ENCODE measurements at regions of chr6 and their contacts with region 1.

Region 1: DNA sequence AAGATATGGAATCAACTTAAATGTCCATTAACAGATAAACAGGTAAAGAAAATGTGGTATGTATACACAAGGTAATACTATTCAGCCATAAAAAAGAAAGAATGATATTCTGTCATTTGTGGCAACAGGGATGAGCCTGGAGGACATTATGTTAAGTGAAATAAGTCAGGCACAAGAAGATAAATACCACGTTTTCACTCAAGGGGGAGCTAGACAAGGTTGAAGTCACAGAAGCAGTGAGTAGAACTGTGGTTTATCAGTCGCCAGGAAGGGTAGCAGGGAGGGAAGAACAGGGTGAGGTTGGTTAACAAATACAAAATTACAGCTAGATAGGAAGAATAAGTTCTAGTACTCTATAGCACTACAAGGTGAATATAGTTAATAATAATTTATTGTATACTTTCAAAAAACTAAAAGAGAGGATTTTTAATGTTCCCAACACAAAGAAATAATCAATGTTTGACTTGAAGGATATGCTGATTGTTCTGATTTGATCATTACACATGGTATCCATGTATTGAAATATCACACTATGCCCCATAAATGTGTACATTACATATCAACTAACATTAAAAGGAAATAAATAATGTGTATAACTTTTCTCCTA is 21.1 kb downstream of the RTN4IP1 start:
- DNase-seq: no peak
- H3K4me3 ChIP-seq: no peak overlapping the region
- H3K27ac ChIP-seq: no peak overlapping the region
- H3K4me1 ChIP-seq: peaks cover 0 to 4% of the 10 kb centered on the region in 2 donors
- H3K27me3 ChIP-seq: no peaks in the 10 kb centered on the region
- CTCF ChIP-seq: peak in 4 of 6 experiments; percentile 59 to 89 (median 72)
- POLR2A ChIP-seq: no peak

Region 2: DNA sequence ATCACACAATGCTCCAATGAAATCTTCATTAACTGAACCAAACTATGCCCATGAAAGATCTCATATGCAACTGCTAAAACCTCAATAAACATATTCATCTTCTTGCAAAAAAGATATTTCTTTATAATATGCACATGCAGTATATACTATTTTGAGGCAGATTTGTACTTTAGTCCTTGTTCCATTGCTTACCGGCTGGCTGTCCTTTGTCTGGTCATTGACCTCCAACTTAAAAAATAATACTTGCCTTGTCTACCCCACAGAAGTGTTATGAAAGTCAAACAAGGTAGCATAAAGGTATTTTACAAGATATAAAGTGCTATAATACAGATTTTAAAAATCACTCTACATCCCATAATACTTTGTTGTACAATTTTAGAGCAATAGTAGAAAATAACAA is 370.9 kb before region 1 on chr6:
- intact Hi-C with region 1: no loop called
- DNase-seq: no peak
- H3K4me3 ChIP-seq: no peak overlapping the region
- H3K27ac ChIP-seq: no peak overlapping the region
- H3K4me1 ChIP-seq: no peaks in the 10 kb centered on the region
- H3K27me3 ChIP-seq: no peaks in the 10 kb centered on the region
- CTCF ChIP-seq: no peak
- POLR2A ChIP-seq: no peak

Region 3: GRCh38 chr6:106677282-106677681 is 69.1 kb after region 1 on chr6:
- intact Hi-C with region 1: no loop called
- DNase-seq: no peak
- H3K4me3 ChIP-seq: no peak overlapping the region
- H3K27ac ChIP-seq: no peak overlapping the region
- H3K4me1 ChIP-seq: no peaks in the 10 kb centered on the region
- H3K27me3 ChIP-seq: no peaks in the 10 kb centered on the region
- CTCF ChIP-seq: no peak
- POLR2A ChIP-seq: no peak

Region 4: GRCh38 chr6:106820412-106820852 is 212.3 kb after region 1 on chr6:
- intact Hi-C with region 1: no loop called
- DNase-seq: no peak
- H3K4me3 ChIP-seq: no peak overlapping the region
- H3K27ac ChIP-seq: peak overlapping the region in 2 of 3 donors; percentile 3 to 39
- H3K4me1 ChIP-seq: peaks cover 17 to 34% of the 10 kb centered on the region in 2 donors
- H3K27me3 ChIP-seq: no peaks in the 10 kb centered on the region
- CTCF ChIP-seq: no peak
- POLR2A ChIP-seq: no peak

Region 5: GRCh38 chr6:106981926-106982325 is 373.8 kb after region 1 on chr6:
- intact Hi-C with region 1: loop called (anchors 5 kb)
- DNase-seq: no peak
- H3K4me3 ChIP-seq: no peak overlapping the region
- H3K27ac ChIP-seq: no peak overlapping the region
- H3K4me1 ChIP-seq: peaks cover 6% of the 10 kb centered on the region in 2 donors
- H3K27me3 ChIP-seq: no peaks in the 10 kb centered on the region
- CTCF ChIP-seq: no peak
- POLR2A ChIP-seq: no peak